ENCODE measurements at regions of chr1 and their contacts with region 1.

Region 1: GRCh38 chr1:35882945-35883634 is at the start of gene AGO1:
- DNase-seq: peak; percentile 90
- ATAC-seq: peak; percentile 96 to 97
- H3K4me3 ChIP-seq: peak within 1 kb of the TSS; percentile 98
- H3K27ac ChIP-seq: peak within 1 kb of the TSS; percentile 92 to 93
- H3K4me1 ChIP-seq: peaks cover 24% of the 10 kb centered on the region; the same call in 2 of the 3 replicates
- CTCF ChIP-seq: peak; percentile 69
- EP300 ChIP-seq: no peak
- POLR2A ChIP-seq: peak; percentile 74
- RAD21 ChIP-seq: peak in 1 of 2 experiments; percentile 4; a peak in 1 of 5 replicates
- polyA plus RNA-seq, gene AGO1: 7.0 and 10.6 TPM in 2 replicates

Region 2: GRCh38 chr1:35894183-35894582 is 11.1 kb after region 1 on chr1:
- CTCF ChIA-PET with region 1: interaction called, 11 read pairs
- POLR2A ChIA-PET with region 1: no interaction called
- DNase-seq: peak in 1 of 2 experiments; percentile 46
- ATAC-seq: no peak; a peak in 1 of 6 replicates
- H3K4me3 ChIP-seq: no peak overlapping the region
- H3K27ac ChIP-seq: peak overlapping the region; percentile 33 to 73; a peak in 3 of 6 replicates
- H3K4me1 ChIP-seq: peaks cover 10% of the 10 kb centered on the region
- CTCF ChIP-seq: no peak
- EP300 ChIP-seq: no peak
- POLR2A ChIP-seq: no peak
- RAD21 ChIP-seq: no peak